Esophagus muscularis mucosa (tissue), 4 donors: ENCODE measurements at regions of chr20 and their contacts with region 1.

Region 1: DNA sequence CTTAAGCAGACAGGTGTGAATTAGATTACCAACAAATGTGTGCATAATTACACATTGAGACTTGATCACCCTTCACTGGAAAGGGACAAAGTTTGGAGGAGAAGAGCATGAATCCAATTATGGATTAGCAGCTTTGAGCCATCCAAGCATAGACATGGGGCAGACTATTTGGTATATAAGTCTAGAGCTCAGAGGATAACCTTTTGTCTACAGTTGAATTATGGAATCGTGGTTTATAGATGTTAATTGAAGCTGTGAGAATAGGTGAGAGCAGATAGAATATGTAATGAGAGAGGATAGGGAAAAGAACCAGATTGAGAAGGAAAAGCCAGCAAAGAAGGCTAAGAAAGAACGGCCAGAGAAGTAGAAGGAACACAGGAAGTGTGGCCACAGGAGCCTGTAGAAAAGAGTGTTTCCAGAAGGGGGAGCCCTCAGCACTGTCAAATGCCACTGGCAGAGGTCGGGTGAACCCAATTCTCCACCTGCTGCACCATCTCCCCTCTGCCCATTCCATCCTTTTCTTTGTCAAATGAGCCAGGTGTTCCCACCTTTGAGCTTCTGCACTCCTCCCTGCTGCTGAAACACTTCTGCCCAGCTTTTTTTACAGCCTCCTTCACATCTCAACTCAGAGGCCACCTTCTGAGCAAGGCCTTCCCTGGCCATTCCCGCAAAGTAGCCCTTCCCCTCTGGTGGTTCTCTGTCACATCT is 7.3 kb downstream of the DNTTIP1 start:
- DNase-seq: no peak
- H3K4me3 ChIP-seq: no peak overlapping the region
- H3K27ac ChIP-seq: peak overlapping the region in 3 of 4 donors; percentile 9 to 30 (median 12)
- H3K4me1 ChIP-seq: peaks cover 0 to 12% (median 9%) of the 10 kb centered on the region in 4 donors
- H3K27me3 ChIP-seq: no peaks in the 10 kb centered on the region
- CTCF ChIP-seq: peak; percentile 65 to 76 (median 69)
- EP300 ChIP-seq: no peak
- POLR2A ChIP-seq: no peak

Region 2: GRCh38 chr20:45880988-45881788 is 82.1 kb after region 1 on chr20 and contains the start of gene ZSWIM1:
- intact Hi-C with region 1: loop called (anchors 10 kb)
- DNase-seq: peak; percentile 100
- H3K4me3 ChIP-seq: peak within 1 kb of the TSS; percentile 61 to 67 (median 66)
- H3K27ac ChIP-seq: peak within 1 kb of the TSS; percentile 80 to 91 (median 86)
- H3K4me1 ChIP-seq: peaks cover 16 to 49% (median 32%) of the 10 kb centered on the region in 4 donors
- H3K27me3 ChIP-seq: no peaks in the 10 kb centered on the region
- CTCF ChIP-seq: no peak
- EP300 ChIP-seq: no peak
- POLR2A ChIP-seq: peak; percentile 16
- total RNA-seq, gene ZSWIM1: 7.1 to 13.5 (median 9.2) TPM

Region 3: GRCh38 chr20:45934586-45935415 is 135.7 kb after region 1 on chr20 and contains the start of gene PCIF1:
- intact Hi-C with region 1: loop called (anchors 10 kb)
- DNase-seq: peak; percentile 100
- H3K4me3 ChIP-seq: peak within 1 kb of the TSS; percentile 92 to 100 (median 100)
- H3K27ac ChIP-seq: peak within 1 kb of the TSS; percentile 100
- H3K4me1 ChIP-seq: peaks cover 20 to 45% (median 30%) of the 10 kb centered on the region in 4 donors
- H3K27me3 ChIP-seq: no peaks in the 10 kb centered on the region
- CTCF ChIP-seq: no peak
- EP300 ChIP-seq: no peak
- POLR2A ChIP-seq: peak; percentile 85
- total RNA-seq, gene PCIF1: 35.3 to 51.2 (median 37.2) TPM